ENCODE measurements at regions of chr2 and their contacts with region 1.

Region 1: GRCh38 chr2:168346725-168347477 is 99.5 kb upstream of the STK39 start:
- DNase-seq: peak; percentile 63
- ATAC-seq: peak; percentile 91

Region 2: GRCh38 chr2:168194784-168195522 is 151.9 kb before region 1 on chr2:
- intact Hi-C with region 1: no loop called
- DNase-seq: no peak
- ATAC-seq: no peak

Region 3: GRCh38 chr2:168687314-168687713 is 340.4 kb after region 1 on chr2:
- intact Hi-C with region 1: loop called (anchors 5 kb)
- DNase-seq: no peak
- ATAC-seq: peak; percentile 57

Region 4: GRCh38 chr2:168758970-168759820 is 412.3 kb after region 1 on chr2:
- intact Hi-C with region 1: loop called (anchors 5 kb)
- DNase-seq: no peak
- ATAC-seq: peak; percentile 70

Region 5: GRCh38 chr2:168920504-168921157 is 573.7 kb after region 1 on chr2:
- intact Hi-C with region 1: loop called (anchors 5 kb)
- DNase-seq: no peak
- ATAC-seq: no peak